ENCODE measurements at regions of chr20 and their contacts with region 1.

Region 1: GRCh38 chr20:50815162-50815989 is 20.5 kb downstream of the BCAS4 start:
- DNase-seq: peak in 3 of 9 experiments; percentile 14 to 60 (median 40)
- ATAC-seq: peak; percentile 12
- H3K4me3 ChIP-seq: peak overlapping the region; percentile 12 to 25
- H3K4me3 Mint-ChIP-seq: peak overlapping the region; percentile 82
- H3K27ac ChIP-seq: peak overlapping the region in 1 of 2 experiments; percentile 31
- H3K27ac Mint-ChIP-seq: peak overlapping the region; percentile 93
- H3K4me1 ChIP-seq: peaks cover 44% of the 10 kb centered on the region
- H3K4me1 Mint-ChIP-seq: peaks cover 70% of the 10 kb centered on the region
- H3K27me3 ChIP-seq: no peaks in the 10 kb centered on the region
- H3K27me3 Mint-ChIP-seq: no peaks in the 10 kb centered on the region
- CTCF ChIP-seq: no peak

Region 2: DNA sequence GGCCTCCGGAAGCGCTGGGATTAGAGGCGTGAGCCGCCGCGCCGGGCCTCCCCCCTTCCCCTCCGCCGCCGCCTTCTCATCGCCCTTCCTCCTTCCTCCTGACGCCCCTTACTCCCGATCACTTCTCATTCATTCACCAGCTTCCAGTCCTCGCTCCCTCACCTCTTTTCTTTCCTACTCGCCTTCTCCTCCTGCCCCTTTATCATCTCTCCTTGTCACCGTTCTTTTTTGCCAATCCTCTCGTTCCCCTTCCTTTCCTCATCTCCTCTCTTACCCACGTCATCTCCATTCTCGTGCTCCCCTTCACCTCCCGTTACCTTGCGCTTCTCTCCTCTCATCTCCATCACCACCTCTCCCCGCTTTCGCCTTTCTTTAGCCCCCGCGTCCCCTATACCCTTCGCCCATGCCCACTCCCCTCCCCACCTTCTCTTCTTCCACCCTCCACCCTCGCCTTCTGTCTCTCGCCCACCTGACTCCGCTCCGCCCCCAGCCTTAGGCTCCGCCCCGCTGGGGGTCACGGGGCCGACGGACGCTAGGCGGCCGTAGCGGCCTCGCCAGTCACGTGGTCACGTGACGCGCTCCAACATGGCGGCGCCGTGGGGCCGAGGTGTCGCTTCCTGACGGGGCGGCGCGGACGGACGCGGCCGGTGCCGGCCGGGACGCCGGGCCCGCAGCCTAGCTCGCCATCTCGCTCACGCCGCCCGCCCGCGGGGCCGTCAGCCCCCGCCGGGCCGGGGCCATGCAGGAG is 1894.1 kb before region 1 on chr20 and contains the start of gene ARFGEF2:
- CTCF ChIA-PET with region 1: no interaction called
- POLR2A ChIA-PET with region 1: no interaction called
- intact Hi-C with region 1: no loop called
- DNase-seq: peak; percentile 79 to 96 (median 89)
- ATAC-seq: peak; percentile 92
- H3K4me3 ChIP-seq: peak within 1 kb of the TSS; percentile 77 to 99
- H3K4me3 Mint-ChIP-seq: peak within 1 kb of the TSS; percentile 93
- H3K27ac ChIP-seq: peak within 1 kb of the TSS; percentile 93 to 94
- H3K27ac Mint-ChIP-seq: peak within 1 kb of the TSS; percentile 95
- H3K4me1 ChIP-seq: peaks cover 28% of the 10 kb centered on the region
- H3K4me1 Mint-ChIP-seq: peaks cover 49% of the 10 kb centered on the region
- H3K27me3 ChIP-seq: no peaks in the 10 kb centered on the region
- H3K27me3 Mint-ChIP-seq: no peaks in the 10 kb centered on the region
- CTCF ChIP-seq: no peak
- total RNA-seq, gene ARFGEF2: 25.7 to 26.7 TPM

Region 3: GRCh38 chr20:50799890-50800655 is 15.3 kb before region 1 on chr20:
- CTCF ChIA-PET with region 1: interaction called, 57 read pairs
- POLR2A ChIA-PET with region 1: interaction called, 30 read pairs
- intact Hi-C with region 1: loop called (anchors 1 to 2 kb)
- DNase-seq: no peak
- ATAC-seq: no peak
- H3K4me3 ChIP-seq: no peak overlapping the region
- H3K4me3 Mint-ChIP-seq: no peak overlapping the region
- H3K27ac ChIP-seq: no peak overlapping the region
- H3K27ac Mint-ChIP-seq: peak overlapping the region; percentile 58
- H3K4me1 ChIP-seq: peaks cover 22% of the 10 kb centered on the region
- H3K4me1 Mint-ChIP-seq: peaks cover 44% of the 10 kb centered on the region
- H3K27me3 ChIP-seq: no peaks in the 10 kb centered on the region
- H3K27me3 Mint-ChIP-seq: no peaks in the 10 kb centered on the region
- CTCF ChIP-seq: no peak

Region 4: DNA sequence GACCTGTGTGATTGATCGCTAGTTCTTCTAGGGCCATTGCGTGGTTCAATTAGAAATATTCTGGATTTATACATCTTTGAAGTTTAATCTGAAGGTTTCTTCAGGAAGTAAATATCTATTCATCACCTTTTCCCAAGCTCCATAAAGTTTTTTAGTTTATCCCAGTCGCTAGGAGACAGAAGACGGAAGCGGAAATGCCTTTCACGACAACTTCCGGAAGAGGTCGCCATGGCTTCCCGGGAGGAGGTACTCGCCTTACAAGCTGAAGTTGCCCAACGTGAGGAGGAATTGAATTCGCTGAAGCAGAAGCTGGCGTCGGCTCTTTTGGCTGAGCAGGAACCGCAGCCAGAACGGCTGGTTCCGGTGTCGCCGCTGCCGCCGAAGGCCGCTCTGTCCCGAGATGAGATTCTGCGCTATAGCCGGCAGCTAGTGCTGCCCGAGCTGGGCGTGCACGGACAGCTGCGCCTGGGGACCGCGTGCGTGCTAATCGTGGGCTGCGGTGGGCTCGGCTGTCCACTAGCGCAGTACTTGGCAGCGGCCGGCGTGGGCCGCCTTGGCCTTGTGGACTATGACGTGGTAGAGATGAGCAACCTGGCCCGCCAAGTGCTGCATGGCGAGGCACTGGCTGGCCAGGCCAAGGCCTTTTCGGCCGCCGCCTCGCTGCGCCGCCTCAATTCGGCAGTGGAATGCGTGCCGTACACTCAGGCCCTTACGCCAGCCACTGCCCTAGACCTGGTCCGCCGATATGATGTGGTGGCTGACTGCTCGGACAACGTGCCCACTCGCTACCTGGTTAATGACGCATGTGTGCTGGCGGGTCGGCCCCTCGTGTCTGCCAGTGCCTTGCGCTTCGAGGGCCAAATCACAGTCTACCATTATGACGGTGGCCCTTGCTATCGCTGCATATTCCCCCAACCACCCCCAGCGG is 143.5 kb after region 1 on chr20 and contains the start of gene MOCS3:
- CTCF ChIA-PET with region 1: no interaction called
- POLR2A ChIA-PET with region 1: interaction called, 14 read pairs
- intact Hi-C with region 1: loop called (anchors 1 kb)
- DNase-seq: peak; percentile 65 to 95 (median 82)
- ATAC-seq: peak; percentile 77
- H3K4me3 ChIP-seq: peak within 1 kb of the TSS; percentile 73 to 87
- H3K4me3 Mint-ChIP-seq: peak within 1 kb of the TSS; percentile 97
- H3K27ac ChIP-seq: peak within 1 kb of the TSS; percentile 89 to 99
- H3K27ac Mint-ChIP-seq: peak within 1 kb of the TSS; percentile 99
- H3K4me1 ChIP-seq: peaks cover 38% of the 10 kb centered on the region
- H3K4me1 Mint-ChIP-seq: peaks cover 64% of the 10 kb centered on the region
- H3K27me3 ChIP-seq: no peaks in the 10 kb centered on the region
- H3K27me3 Mint-ChIP-seq: no peaks in the 10 kb centered on the region
- CTCF ChIP-seq: no peak
- total RNA-seq, gene MOCS3: 3.6 to 4.1 TPM